CD4-positive, alpha-beta memory T cell (primary cell): ENCODE measurements at regions of chr19 and their contacts with region 1.

Region 1: GRCh38 chr19:57279418-57280066 is 743 bp upstream of the ZNF460 start:
- DNase-seq: peak in 4 of 5 donors; percentile 77 to 85 (median 84)
- H3K4me3 ChIP-seq: peak overlapping the region; percentile 68 to 74
- H3K4me3 Mint-ChIP-seq: peak overlapping the region in 1 of 8 donors; percentile 20
- H3K27ac ChIP-seq: peak overlapping the region; percentile 100
- H3K27ac Mint-ChIP-seq: peak overlapping the region in 1 of 7 donors; percentile 74
- H3K4me1 ChIP-seq: peaks cover 38% of the 10 kb centered on the region
- H3K4me1 Mint-ChIP-seq: peaks cover 0 to 33% (median 23%) of the 10 kb centered on the region in 4 donors
- H3K27me3 ChIP-seq: no peaks in the 10 kb centered on the region
- H3K27me3 Mint-ChIP-seq: no peaks in the 10 kb centered on the region

Region 2: DNA sequence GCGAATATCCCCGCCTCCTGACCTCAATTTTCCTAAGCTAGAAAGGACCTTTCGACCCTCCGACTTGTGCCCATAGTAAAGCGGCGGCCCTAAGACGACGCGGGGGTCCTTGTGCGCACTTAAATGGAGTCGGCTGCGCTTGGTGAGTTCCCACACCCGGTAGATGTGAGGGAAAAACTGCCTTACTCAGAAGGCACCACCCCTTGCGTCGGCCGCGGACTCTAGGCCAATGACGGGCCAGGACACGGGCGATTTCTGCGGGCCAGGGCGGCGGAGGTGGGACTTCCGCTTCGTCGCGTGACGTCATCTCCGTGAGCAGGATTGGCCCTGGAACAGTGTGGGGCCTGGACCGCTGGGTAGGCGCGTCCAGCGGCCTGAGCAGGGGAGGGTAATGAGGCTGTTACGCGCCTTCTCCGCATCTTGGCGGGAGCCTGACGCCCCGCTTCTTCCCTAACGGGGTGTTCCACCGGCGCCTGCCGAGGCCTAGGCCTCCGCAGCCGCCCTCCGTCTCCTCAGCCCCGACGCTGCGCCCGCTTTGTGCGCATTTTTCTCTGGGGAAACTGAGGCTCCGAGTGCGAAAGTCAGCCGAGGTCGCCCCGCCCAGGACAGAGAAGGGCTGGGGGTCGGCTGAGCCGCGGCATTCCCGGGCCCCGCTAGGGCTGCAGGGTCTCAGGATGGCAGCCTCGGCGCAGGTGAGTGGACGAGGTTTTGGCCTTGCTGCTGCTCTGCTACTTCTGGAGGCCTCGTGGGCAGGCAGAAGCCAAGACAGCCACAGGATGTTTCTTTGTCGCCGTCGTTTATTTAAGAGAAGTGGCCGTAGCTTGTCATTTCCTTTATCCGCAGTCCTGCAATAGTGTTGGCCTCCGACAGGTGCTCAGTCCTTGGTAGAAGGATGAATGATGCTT is 40.9 kb after region 1 on chr19 and contains the start of gene ZNF543:
- CTCF ChIA-PET with region 1: no interaction called
- POLR2A ChIA-PET with region 1: interaction called, 3 read pairs
- intact Hi-C with region 1: loop called (anchors 1 kb)
- DNase-seq: peak; percentile 86 to 91 (median 89)
- H3K4me3 ChIP-seq: peak within 1 kb of the TSS; percentile 81 to 90
- H3K4me3 Mint-ChIP-seq: peak within 1 kb of the TSS; percentile 90 to 97 (median 94)
- H3K27ac ChIP-seq: peak within 1 kb of the TSS; percentile 84
- H3K27ac Mint-ChIP-seq: peak within 1 kb of the TSS; percentile 90 to 99 (median 97)
- H3K4me1 ChIP-seq: peaks cover 29% of the 10 kb centered on the region
- H3K4me1 Mint-ChIP-seq: peaks cover 18 to 34% (median 27%) of the 10 kb centered on the region in 4 donors
- H3K27me3 ChIP-seq: peaks cover 8% of the 10 kb centered on the region
- H3K27me3 Mint-ChIP-seq: peaks cover 14 to 19% of the 10 kb centered on the region in 2 donors
- total RNA-seq, gene ZNF543: 9.4 to 10.7 TPM